ENCODE measurements at regions of chr2 and their contacts with region 1.

Region 1: DNA sequence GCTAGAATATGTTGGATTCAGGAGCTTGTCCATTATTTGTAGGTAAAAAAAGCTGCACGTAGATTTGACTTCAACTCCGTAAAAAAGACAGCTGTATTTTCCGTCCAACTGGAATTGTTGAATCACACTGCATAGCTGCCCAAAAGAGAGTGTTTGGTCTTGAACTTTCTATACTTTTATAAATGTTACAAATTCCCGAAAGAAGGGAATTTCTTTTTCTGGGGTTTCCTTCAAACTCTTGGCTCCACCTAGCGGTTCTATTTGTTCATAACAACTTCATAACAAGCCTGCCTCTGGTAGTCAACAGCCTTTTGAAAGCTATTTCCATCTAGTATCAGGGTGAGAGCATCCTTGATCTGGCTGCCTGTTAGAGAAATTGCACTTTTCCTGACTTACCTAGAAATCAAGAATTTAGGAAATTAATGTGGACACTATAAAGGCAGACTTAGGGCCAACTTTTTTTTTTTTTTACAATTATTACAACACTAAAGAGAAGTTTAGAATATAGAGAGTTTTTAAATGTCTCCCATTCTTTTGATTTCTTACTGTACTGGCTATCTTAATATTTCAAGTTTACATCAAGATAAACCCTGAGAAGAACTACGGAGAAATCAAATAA is 48.1 kb downstream of the TMEM185B start:
- DNase-seq: peak; percentile 16
- H3K4me3 ChIP-seq: no peak overlapping the region
- CTCF ChIP-seq: peak; percentile 52

Region 2: GRCh38 chr2:119702918-119703401 is 472.1 kb before region 1 on chr2:
- CTCF ChIA-PET with region 1: interaction called, 42 read pairs
- POLR2A ChIA-PET with region 1: no interaction called
- DNase-seq: no peak
- H3K4me3 ChIP-seq: no peak overlapping the region
- CTCF ChIP-seq: peak; percentile 99

Region 3: DNA sequence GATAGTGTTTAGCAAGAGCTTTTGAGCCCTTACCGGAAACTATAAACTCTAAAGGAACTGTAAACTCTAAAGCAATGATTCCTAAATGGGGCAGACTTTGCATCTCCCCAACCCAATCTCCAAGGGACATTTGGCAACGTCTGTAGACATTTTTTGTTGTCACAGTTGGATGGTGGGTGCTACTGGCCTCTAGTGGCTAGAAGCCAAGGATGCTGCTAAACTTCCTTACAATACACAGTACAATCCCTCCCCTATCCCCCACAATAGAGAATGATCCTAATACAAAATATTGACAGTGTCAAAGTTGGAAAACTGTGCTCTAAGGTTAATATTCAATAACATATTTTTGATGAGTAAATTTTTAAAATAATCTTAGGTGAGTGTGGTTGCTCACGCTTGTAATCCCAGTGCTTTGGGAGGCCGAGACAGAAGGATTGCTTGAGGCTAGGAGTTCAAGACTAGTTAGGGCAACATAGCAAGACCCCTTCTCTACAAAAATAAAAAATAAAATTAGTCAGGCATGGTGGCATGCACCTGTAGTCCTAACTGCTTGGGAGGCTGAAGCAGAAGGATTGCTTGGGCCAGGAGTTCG is 348.6 kb before region 1 on chr2:
- CTCF ChIA-PET with region 1: interaction called, 18 read pairs
- POLR2A ChIA-PET with region 1: no interaction called
- DNase-seq: no peak
- H3K4me3 ChIP-seq: no peak overlapping the region
- CTCF ChIP-seq: peak; percentile 57

Region 4: DNA sequence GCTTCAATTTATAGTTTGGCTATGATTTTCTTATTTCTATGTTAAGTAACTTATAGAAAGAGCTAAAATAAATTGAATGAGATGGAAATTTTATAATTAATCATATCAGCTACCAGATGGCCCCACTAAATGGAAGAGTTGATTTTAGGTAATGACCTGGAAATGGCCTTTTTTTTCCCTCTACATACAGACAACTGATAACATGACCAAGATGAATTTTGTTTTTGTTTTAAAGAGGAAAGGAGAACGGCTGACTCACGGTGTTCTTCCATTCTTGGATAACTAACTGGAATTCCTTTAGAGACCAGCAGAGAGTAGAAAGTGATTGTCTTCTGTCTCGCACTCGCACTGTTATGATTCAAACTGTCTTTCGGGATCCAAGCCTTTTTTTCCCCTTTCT is 42.9 kb before region 1 on chr2:
- CTCF ChIA-PET with region 1: interaction called, 16 read pairs
- POLR2A ChIA-PET with region 1: no interaction called
- DNase-seq: peak; percentile 19
- H3K4me3 ChIP-seq: no peak overlapping the region
- CTCF ChIP-seq: no peak

Region 5: DNA sequence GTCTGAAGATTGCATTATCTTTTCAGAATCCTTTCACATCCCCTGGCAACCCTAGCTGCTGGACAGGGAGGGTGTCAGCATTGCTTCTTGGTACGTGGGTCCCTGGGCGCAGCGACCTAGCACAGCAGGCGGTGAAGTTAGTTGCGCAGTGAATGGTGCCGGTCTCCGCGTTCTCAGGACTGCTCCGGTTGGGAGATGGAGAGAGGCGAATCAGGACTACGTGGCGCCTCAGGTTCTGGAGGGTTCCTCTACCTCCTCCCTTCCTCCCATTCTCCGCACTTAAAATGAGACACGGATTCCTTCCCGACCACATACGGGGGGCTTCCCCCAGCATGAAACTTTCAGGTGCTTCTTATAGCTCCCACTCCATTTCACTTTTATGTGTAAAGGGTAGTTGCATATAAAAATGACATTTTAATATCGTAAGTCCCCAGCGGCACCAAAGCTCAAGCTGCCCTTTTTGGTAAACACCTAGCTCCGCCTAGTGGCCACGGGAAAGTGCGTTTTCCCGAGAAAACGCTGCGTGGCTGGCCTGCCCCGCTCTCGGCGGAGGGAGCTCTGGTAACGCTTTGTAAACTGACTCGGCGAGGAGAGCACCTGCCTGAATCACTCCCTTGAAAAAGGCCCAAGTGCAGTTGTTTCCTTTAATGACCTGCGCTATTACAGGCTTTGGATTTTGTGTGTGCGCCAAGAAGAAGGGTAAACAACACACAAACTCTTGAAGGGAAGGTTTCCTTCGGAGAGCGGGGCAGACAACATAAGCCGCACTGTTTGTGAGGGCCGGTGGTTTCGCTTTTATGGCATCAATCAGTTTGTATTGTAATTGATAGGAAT is 138.0 kb after region 1 on chr2:
- CTCF ChIA-PET with region 1: interaction called, 15 read pairs
- POLR2A ChIA-PET with region 1: no interaction called
- DNase-seq: no peak
- H3K4me3 ChIP-seq: peak overlapping the region; percentile 63
- CTCF ChIP-seq: peak; percentile 94

Measured in AG04449 (cell line).